GM12878 (cell line): ENCODE measurements at regions of chr18 and their contacts with region 1.

Region 1: DNA sequence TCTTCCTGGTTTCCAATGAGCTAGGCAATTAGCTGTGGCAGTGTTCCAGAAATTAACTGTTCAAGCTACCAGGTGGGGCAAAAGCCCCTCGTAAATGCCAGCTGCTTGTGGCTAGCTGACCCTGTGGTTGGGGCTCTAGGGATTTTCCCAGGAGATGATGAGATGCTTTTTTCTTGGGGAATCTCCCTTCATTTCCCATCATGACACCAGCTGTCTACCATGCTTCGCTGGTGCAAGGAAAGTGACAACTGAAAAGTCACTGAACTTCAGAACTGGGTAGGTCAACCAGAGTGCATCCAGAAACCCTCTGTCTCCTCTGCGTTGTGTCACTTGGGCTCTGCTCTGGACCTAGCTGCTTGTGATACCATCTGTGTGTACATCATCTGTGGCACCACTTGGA is 386.5 kb upstream of the DCC start:
- DNase-seq: peak; percentile 83
- ATAC-seq: peak; percentile 91
- H3K4me3 ChIP-seq: no peak overlapping the region
- H3K27ac ChIP-seq: peak overlapping the region; percentile 76
- H3K4me1 ChIP-seq: peaks cover 22% of the 10 kb centered on the region
- H3K27me3 ChIP-seq: no peaks in the 10 kb centered on the region
- CTCF ChIP-seq: no peak
- EP300 ChIP-seq: peak; percentile 92 to 94
- POLR2A ChIP-seq: no peak; the same call in 1 of the 2 replicates
- RAD21 ChIP-seq: no peak; the same call in 1 of the 2 replicates

Region 2: GRCh38 chr18:51478908-51479307 is 474.6 kb before region 1 on chr18:
- CTCF ChIA-PET with region 1: no interaction called
- POLR2A ChIA-PET with region 1: no interaction called
- RAD21 ChIA-PET with region 1: no interaction called
- SMC1A ChIA-PET with region 1: no interaction called
- in situ Hi-C with region 1: no loop called
- intact Hi-C with region 1: no loop called
- DNase-seq: no peak
- ATAC-seq: no peak
- H3K4me3 ChIP-seq: no peak overlapping the region
- H3K27ac ChIP-seq: no peak overlapping the region
- H3K4me1 ChIP-seq: no peaks in the 10 kb centered on the region
- H3K27me3 ChIP-seq: peaks cover 0 to 2% of the 10 kb centered on the region in 2 experiments; a peak in 1 of 4 replicates
- CTCF ChIP-seq: no peak
- EP300 ChIP-seq: no peak
- POLR2A ChIP-seq: no peak
- RAD21 ChIP-seq: no peak

Region 3: DNA sequence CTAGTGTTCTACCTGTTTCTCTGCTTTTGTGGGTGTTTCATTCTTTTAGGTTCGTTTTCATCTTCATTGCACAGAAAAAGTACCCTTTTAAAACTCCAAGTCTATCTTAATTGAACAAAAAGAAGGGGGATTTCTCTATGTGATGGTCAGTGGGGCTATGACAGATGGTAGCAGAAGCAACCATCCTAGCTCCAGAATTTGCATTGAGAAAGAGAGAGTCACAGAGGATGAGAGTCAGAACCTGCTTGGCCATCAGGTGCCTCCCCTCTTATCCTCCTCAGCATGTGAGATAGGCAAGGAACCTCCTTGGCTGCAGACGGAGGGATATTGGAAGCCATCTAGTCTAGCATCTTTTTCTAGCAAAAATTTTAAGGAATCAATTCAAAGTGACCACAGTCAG is 11.5 kb before region 1 on chr18:
- CTCF ChIA-PET with region 1: interaction called, 3 read pairs
- POLR2A ChIA-PET with region 1: interaction called, 4 read pairs
- RAD21 ChIA-PET with region 1: interaction called, 15 read pairs
- SMC1A ChIA-PET with region 1: interaction called, 31 read pairs
- in situ Hi-C with region 1: no loop called
- intact Hi-C with region 1: no loop called
- DNase-seq: no peak
- ATAC-seq: peak; percentile 43
- H3K4me3 ChIP-seq: no peak overlapping the region
- H3K27ac ChIP-seq: no peak overlapping the region
- H3K4me1 ChIP-seq: no peaks in the 10 kb centered on the region
- H3K27me3 ChIP-seq: no peaks in the 10 kb centered on the region
- CTCF ChIP-seq: no peak
- EP300 ChIP-seq: no peak
- POLR2A ChIP-seq: no peak
- RAD21 ChIP-seq: no peak

Region 4: DNA sequence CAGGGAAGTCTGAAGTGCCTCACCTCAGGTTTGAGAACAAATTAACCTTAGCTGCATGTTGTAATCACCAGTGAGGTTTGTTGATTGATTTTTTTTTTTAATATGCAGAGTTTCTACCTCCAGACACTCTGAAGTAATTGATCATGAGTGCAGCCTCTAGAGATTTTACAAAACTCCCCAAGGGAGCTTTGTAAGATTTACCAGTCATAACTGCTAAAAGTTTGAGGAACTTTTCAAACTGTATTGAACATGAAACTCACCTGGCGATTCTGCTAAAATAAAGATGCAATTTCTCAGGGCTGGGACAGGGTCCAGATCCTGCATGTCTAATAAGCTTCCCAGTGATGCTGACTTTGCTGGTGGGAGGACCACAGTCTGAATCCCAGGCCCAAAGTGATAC is 46.9 kb after region 1 on chr18:
- CTCF ChIA-PET with region 1: interaction called, 3 read pairs
- POLR2A ChIA-PET with region 1: interaction called, 3 read pairs
- RAD21 ChIA-PET with region 1: interaction called, 34 read pairs
- SMC1A ChIA-PET with region 1: interaction called, 39 read pairs
- in situ Hi-C with region 1: no loop called
- intact Hi-C with region 1: loop called (anchors 1 kb)
- DNase-seq: no peak
- ATAC-seq: peak; percentile 81
- H3K4me3 ChIP-seq: no peak overlapping the region
- H3K27ac ChIP-seq: no peak overlapping the region
- H3K4me1 ChIP-seq: no peaks in the 10 kb centered on the region
- H3K27me3 ChIP-seq: no peaks in the 10 kb centered on the region
- CTCF ChIP-seq: no peak
- EP300 ChIP-seq: no peak
- POLR2A ChIP-seq: no peak
- RAD21 ChIP-seq: no peak